PC-3 (cell line): ENCODE measurements at regions of chr14 and their contacts with region 1.

Region 1: DNA sequence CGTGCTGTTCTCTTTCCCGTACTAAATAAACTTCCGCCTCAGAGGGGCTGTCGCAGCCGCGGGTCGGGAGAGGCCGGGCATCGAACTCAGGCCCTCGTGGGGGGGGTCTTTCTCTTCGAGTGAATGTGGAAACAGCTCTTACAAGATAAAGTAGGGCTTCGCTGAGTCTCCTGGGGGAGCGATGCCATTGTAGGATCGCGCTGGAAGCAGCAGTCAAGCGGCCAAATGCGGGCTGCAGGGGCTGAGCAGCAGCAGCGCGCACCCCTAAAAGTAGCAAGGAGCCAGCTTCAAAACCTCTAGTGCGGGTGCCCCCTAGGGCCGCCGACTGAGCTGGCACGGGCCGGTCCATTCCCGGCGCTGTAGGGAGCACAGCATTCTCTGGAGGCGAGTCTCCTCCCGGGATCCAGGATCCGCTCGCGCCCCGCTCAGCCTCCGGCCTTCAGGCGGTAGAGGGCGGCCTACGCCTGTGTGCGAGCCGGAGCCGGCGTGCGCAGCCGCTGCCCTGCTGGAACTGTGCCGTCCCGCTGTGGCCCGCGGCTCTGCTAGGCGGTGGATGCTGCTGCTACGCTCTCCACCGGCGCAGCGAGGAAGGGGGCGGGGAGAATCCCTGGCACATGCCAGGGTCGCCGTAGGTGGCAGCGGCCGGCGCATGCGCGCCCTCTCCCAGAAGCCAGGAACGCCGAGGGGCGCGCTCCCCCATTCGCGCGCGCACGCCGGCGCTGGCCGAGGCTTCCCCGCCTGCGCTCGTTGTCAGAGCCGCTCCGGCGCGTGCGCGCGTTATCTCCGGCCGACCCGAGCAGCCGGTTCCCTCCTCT is at the start of gene FUT8:
- DNase-seq: peak; percentile 98
- ATAC-seq: peak; percentile 82
- H3K4me3 ChIP-seq: peak within 1 kb of the TSS; percentile 86
- H3K27ac ChIP-seq: peak within 1 kb of the TSS; percentile 86
- H3K4me1 ChIP-seq: peaks cover 25% of the 10 kb centered on the region
- H3K27me3 ChIP-seq: no peaks in the 10 kb centered on the region
- CTCF ChIP-seq: peak; percentile 72
- total RNA-seq, gene FUT8: 129 and 132 TPM in 2 replicates

Region 2: GRCh38 chr14:65164068-65164824 is 248.0 kb before region 1 on chr14:
- CTCF ChIA-PET with region 1: interaction called, 15 read pairs
- POLR2A ChIA-PET with region 1: interaction called, 3 read pairs
- intact Hi-C with region 1: loop called (anchors 1 kb)
- DNase-seq: peak; percentile 79
- ATAC-seq: peak; percentile 80
- H3K4me3 ChIP-seq: no peak overlapping the region
- H3K27ac ChIP-seq: no peak overlapping the region
- H3K4me1 ChIP-seq: peaks cover 4% of the 10 kb centered on the region; the same call in 1 of the 2 replicates
- H3K27me3 ChIP-seq: no peaks in the 10 kb centered on the region
- CTCF ChIP-seq: peak; percentile 94

Region 3: GRCh38 chr14:65281991-65282895 is 130.0 kb before region 1 on chr14:
- CTCF ChIA-PET with region 1: interaction called, 13 read pairs
- POLR2A ChIA-PET with region 1: interaction called, 5 read pairs
- intact Hi-C with region 1: loop called (anchors 1 kb)
- DNase-seq: no peak
- ATAC-seq: peak; percentile 57
- H3K4me3 ChIP-seq: no peak overlapping the region
- H3K27ac ChIP-seq: no peak overlapping the region
- H3K4me1 ChIP-seq: peaks cover 30% of the 10 kb centered on the region
- H3K27me3 ChIP-seq: no peaks in the 10 kb centered on the region
- CTCF ChIP-seq: no peak

Region 4: GRCh38 chr14:65373679-65374039 is 38.6 kb before region 1 on chr14:
- CTCF ChIA-PET with region 1: interaction called, 5 read pairs
- POLR2A ChIA-PET with region 1: no interaction called
- intact Hi-C with region 1: loop called (anchors 2 kb)
- DNase-seq: peak; percentile 29
- ATAC-seq: peak; percentile 75
- H3K4me3 ChIP-seq: peak overlapping the region; percentile 58
- H3K27ac ChIP-seq: 0 out of 2 replicates have a peak overlapping the region, but pooled peaks have one; percentile 0
- H3K4me1 ChIP-seq: no peaks in the 10 kb centered on the region
- H3K27me3 ChIP-seq: no peaks in the 10 kb centered on the region
- CTCF ChIP-seq: peak; percentile 28; the same call in 1 of the 2 replicates

Region 5: DNA sequence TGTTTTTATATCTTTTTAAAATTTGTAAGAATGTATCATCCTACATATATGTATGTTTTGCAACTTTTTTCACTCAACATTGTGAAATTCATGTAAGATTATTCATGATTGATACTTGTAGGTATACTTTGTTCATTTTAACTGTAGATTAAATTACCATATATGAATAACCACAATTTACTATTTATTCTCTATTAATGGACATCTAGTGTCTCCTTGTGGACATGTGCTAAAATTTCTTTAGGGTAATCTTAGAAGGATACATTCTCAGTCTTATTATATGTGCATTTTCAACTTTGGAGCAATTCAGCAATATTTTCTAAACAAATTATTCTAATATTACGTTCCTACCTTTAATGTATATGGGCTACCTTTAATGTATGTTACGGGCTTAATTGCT is 192.7 kb after region 1 on chr14:
- CTCF ChIA-PET with region 1: no interaction called
- POLR2A ChIA-PET with region 1: interaction called, 8 read pairs
- intact Hi-C with region 1: loop called (anchors 1 kb)
- DNase-seq: peak; percentile 35
- ATAC-seq: peak; percentile 74
- H3K4me3 ChIP-seq: no peak overlapping the region
- H3K27ac ChIP-seq: no peak overlapping the region
- H3K4me1 ChIP-seq: peaks cover 4% of the 10 kb centered on the region; the same call in 1 of the 2 replicates
- H3K27me3 ChIP-seq: no peaks in the 10 kb centered on the region
- CTCF ChIP-seq: peak; percentile 76

Region 6: DNA sequence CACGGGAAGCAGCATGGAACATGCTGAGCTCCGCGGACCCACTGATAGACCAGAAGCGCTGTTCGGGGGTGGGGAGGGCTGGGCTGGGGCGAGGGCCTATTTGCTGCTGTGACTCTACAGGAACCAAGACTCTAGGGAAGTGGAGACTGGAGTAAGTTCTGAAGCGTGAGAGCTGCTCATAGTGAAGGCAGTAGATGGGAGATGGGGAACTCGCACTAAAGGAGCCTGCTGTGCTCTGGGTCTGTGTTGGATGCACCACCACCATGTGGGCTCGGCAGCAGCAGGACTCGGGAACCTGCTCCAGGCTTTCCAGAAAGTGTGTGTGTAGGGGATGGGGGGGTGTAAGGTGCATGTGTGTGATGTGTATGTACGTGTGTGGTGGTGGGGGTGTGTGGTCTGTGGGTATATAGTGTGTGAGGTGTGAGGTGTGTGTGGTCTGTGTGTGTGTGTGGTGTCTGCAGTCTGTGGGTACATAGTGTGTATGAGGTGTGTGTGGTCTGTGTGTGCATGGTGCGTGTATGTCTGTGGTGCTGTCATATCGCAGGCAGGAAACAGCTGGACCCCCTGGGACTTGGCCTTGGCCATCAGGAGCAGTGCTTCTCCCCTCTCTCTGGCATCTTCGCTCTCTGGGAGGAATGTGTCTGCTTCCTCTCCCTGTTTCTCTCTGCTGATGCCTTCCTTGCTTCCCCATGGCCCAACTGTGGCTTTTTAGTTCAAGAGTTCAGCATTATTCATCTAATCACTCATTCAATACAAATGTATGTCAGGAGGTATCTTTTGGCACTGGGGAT is 379.1 kb after region 1 on chr14:
- CTCF ChIA-PET with region 1: no interaction called
- POLR2A ChIA-PET with region 1: interaction called, 24 read pairs
- intact Hi-C with region 1: no loop called
- DNase-seq: peak; percentile 62
- ATAC-seq: peak; percentile 47
- H3K4me3 ChIP-seq: no peak overlapping the region
- H3K27ac ChIP-seq: peak overlapping the region; percentile 40
- H3K4me1 ChIP-seq: peaks cover 12% of the 10 kb centered on the region
- H3K27me3 ChIP-seq: no peaks in the 10 kb centered on the region
- CTCF ChIP-seq: no peak

Region 7: GRCh38 chr14:66359500-66359899 is 947.3 kb after region 1 on chr14:
- CTCF ChIA-PET with region 1: no interaction called
- POLR2A ChIA-PET with region 1: interaction called, 10 read pairs
- intact Hi-C with region 1: no loop called
- DNase-seq: peak; percentile 70
- ATAC-seq: peak; percentile 34
- H3K4me3 ChIP-seq: no peak overlapping the region
- H3K27ac ChIP-seq: no peak overlapping the region
- H3K4me1 ChIP-seq: no peaks in the 10 kb centered on the region
- H3K27me3 ChIP-seq: peaks cover 40% of the 10 kb centered on the region
- CTCF ChIP-seq: peak; percentile 84